ENCODE measurements at regions of chr14 and their contacts with region 1.

Region 1: GRCh38 chr14:51780006-51780692 is 80.3 kb upstream of the GNG2 start:
- DNase-seq: peak in 1 of 2 experiments; percentile 86
- H3K4me3 ChIP-seq: peak overlapping the region in 1 of 4 experiments; percentile 23; a peak in 2 of 8 replicates
- H3K27ac ChIP-seq: no peak overlapping the region
- H3K4me1 ChIP-seq: no peaks in the 10 kb centered on the region; a peak in 1 of 7 replicates
- H3K27me3 ChIP-seq: no peaks in the 10 kb centered on the region
- CTCF ChIP-seq: peak; percentile 56 to 69 (median 67)
- EP300 ChIP-seq: no peak
- POLR2A ChIP-seq: no peak
- RAD21 ChIP-seq: peak; percentile 86 to 87

Region 2: DNA sequence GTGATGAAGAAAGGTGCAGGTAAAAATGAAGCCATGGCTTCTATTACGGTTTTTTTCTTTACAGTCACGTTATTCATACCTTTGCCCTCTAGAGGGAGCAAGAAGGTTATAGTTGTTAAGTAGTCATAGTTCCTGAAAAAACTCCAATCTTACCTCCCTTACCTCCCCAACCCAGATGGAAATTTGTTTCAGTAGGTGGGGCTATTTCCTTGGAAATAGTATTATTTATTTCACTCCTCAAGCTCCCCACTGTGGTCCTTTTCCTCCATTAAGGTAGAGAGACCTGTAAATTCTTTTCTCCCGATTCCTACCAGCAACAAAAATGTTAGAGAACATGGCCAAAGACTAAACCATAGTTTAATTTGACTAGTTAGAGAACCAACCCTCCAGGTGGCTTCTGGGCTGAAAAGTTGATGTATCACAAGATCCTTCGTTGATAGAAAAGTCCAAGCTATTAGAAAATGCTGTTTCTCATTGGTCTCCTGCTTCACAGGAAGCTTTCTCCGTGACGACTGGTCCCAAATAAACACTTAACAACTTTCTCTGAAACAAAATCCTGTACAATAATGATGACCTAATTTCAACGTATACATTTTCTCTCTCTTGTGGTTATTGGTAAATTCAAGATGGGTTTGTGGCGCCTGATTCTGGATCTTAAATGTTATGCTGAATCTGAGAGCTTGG is 496.6 kb before region 1 on chr14:
- CTCF ChIA-PET with region 1: interaction called, 144 read pairs
- POLR2A ChIA-PET with region 1: no interaction called
- DNase-seq: no peak
- H3K4me3 ChIP-seq: no peak overlapping the region
- H3K27ac ChIP-seq: no peak overlapping the region
- H3K4me1 ChIP-seq: no peaks in the 10 kb centered on the region
- H3K27me3 ChIP-seq: no peaks in the 10 kb centered on the region
- CTCF ChIP-seq: peak in 2 of 3 experiments; percentile 72 to 76; a peak in 2 of 4 replicates
- EP300 ChIP-seq: no peak
- POLR2A ChIP-seq: no peak
- RAD21 ChIP-seq: peak; percentile 81 to 82

Region 3: GRCh38 chr14:51369814-51370213 is 410.3 kb before region 1 on chr14:
- CTCF ChIA-PET with region 1: interaction called, 12 read pairs
- POLR2A ChIA-PET with region 1: no interaction called
- DNase-seq: peak in 1 of 2 experiments; percentile 58
- H3K4me3 ChIP-seq: no peak overlapping the region
- H3K27ac ChIP-seq: no peak overlapping the region
- H3K4me1 ChIP-seq: peaks cover 0 to 5% (median 0%) of the 10 kb centered on the region in 4 experiments; a peak in 3 of 7 replicates
- H3K27me3 ChIP-seq: no peaks in the 10 kb centered on the region
- CTCF ChIP-seq: peak; percentile 50 to 68 (median 53)
- EP300 ChIP-seq: no peak
- POLR2A ChIP-seq: no peak
- RAD21 ChIP-seq: peak; percentile 77 to 81

Region 4: DNA sequence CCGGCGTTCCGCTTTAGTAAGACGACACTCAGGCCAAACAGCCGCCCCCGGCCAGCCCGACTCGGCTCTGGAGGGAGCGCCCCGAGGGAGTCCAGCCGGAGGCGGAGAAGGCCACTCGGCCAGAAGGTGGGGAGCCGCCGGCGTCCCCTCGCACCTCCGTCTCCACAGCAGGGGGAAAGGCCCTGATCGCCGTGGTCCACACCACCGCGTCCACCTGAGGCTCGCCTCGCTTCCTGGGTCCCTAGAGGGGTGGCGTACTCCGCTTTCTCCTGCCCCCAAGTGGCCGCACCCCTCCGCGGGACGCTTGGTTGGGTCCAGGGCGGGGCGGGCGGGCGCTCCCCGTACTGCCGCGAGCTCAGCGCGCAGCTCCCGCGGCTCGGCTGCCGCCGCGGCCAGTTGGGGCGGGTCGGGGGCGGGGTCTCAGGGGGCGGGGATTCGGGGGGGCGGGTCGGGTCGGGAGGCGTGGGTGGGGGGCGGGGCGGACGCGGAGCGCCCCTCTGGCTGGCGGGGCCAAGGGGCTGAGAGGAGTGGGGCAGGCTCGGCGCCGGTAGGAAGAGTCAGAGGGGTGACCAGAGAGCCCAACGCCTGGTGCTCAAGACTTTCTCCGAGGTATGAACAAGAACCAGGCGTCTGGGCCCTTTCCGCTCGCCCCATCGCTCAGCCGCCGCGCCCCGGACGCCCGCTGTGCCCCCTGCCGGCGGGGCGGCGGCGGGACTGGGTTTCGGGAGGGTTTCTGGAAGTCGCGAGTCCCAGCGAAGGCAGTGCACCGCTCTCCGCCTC is 128.6 kb before region 1 on chr14 and contains the start of gene FRMD6:
- CTCF ChIA-PET with region 1: interaction called, 10 read pairs
- POLR2A ChIA-PET with region 1: no interaction called
- DNase-seq: peak; percentile 44 to 89
- H3K4me3 ChIP-seq: peak within 1 kb of the TSS; percentile 67 to 85 (median 82)
- H3K27ac ChIP-seq: peak within 1 kb of the TSS; percentile 100
- H3K4me1 ChIP-seq: peaks cover 0 to 6% (median 0%) of the 10 kb centered on the region in 4 experiments; a peak in 3 of 7 replicates
- H3K27me3 ChIP-seq: no peaks in the 10 kb centered on the region
- CTCF ChIP-seq: peak in 2 of 3 experiments; percentile 16 to 40; a peak in 3 of 4 replicates
- EP300 ChIP-seq: peak in 1 of 2 experiments; percentile 98; a peak in 2 of 3 replicates
- POLR2A ChIP-seq: peak; percentile 60 to 73
- RAD21 ChIP-seq: peak in 1 of 2 experiments; percentile 32; a peak in 1 of 4 replicates
- total RNA-seq, gene FRMD6: 20.8 and 23.7 TPM in 2 replicates

Region 5: GRCh38 chr14:51738754-51739153 is 41.4 kb before region 1 on chr14:
- CTCF ChIA-PET with region 1: interaction called, 10 read pairs
- POLR2A ChIA-PET with region 1: no interaction called
- DNase-seq: peak in 1 of 2 experiments; percentile 13
- H3K4me3 ChIP-seq: no peak overlapping the region
- H3K27ac ChIP-seq: no peak overlapping the region
- H3K4me1 ChIP-seq: no peaks in the 10 kb centered on the region
- H3K27me3 ChIP-seq: no peaks in the 10 kb centered on the region
- CTCF ChIP-seq: peak; percentile 31 to 57 (median 55)
- EP300 ChIP-seq: no peak
- POLR2A ChIP-seq: no peak
- RAD21 ChIP-seq: peak; percentile 46 to 53; a peak in 3 of 4 replicates

Region 6: DNA sequence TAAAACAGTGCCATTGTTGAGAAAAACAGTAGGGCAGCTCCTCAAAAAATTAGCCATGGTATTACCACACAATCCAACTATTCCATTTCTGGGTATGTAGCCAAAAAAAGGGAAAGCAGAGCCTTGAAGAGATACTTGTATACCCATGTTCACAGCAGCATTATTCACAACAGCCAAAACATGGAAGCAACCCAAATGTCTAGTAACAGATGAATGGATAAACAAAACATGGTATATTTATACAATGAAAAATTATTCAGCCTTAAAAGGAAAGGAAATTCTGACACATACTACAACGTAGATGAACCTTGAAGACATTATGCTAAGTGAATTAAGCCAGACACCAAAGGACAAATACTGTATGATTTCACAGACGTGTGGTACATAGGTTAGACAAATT is 12.7 kb after region 1 on chr14:
- CTCF ChIA-PET with region 1: interaction called, 23 read pairs
- POLR2A ChIA-PET with region 1: no interaction called
- DNase-seq: no peak
- H3K4me3 ChIP-seq: no peak overlapping the region
- H3K27ac ChIP-seq: no peak overlapping the region
- H3K4me1 ChIP-seq: no peaks in the 10 kb centered on the region
- H3K27me3 ChIP-seq: no peaks in the 10 kb centered on the region
- CTCF ChIP-seq: no peak
- EP300 ChIP-seq: no peak
- POLR2A ChIP-seq: no peak
- RAD21 ChIP-seq: no peak

Region 7: DNA sequence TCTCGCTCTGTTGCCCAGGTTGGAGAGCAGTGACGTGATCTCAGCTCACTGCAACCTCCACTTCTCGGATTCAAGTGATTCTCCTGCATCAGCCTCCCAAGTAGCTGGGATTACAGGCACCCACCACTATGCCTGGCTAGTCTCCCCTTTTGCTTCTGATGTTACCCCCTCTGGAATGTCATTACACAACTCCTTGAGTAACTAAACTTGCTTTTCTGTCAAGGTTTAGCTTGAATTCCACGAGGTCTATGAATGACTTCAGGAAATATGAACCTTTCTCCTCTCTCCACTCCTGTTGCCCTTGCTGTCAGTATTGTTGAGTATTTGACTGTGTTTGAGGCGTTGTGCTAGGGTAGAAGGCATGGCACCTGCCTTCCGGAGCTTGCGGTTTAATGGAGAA is 192.4 kb after region 1 on chr14:
- CTCF ChIA-PET with region 1: interaction called, 53 read pairs
- POLR2A ChIA-PET with region 1: no interaction called
- DNase-seq: no peak
- H3K4me3 ChIP-seq: no peak overlapping the region
- H3K27ac ChIP-seq: no peak overlapping the region
- H3K4me1 ChIP-seq: no peaks in the 10 kb centered on the region
- H3K27me3 ChIP-seq: no peaks in the 10 kb centered on the region
- CTCF ChIP-seq: no peak
- EP300 ChIP-seq: no peak
- POLR2A ChIP-seq: no peak
- RAD21 ChIP-seq: no peak

Measured in H1 (cell line).